ENCODE measurements at regions of chr12 and their contacts with region 1.

Region 1: GRCh38 chr12:56987551-56988053 is 18.7 kb downstream of the ZBTB39 start:
- DNase-seq: peak; percentile 80 to 82
- ATAC-seq: peak; percentile 74 to 84
- H3K4me3 ChIP-seq: no peak overlapping the region
- H3K27ac ChIP-seq: peak overlapping the region; percentile 22 to 34; a peak in 2 of 6 replicates
- H3K4me1 ChIP-seq: peaks cover 13% of the 10 kb centered on the region; the same call in 2 of the 3 replicates
- CTCF ChIP-seq: peak; percentile 91
- EP300 ChIP-seq: no peak
- POLR2A ChIP-seq: no peak
- RAD21 ChIP-seq: peak; percentile 98 to 99

Region 2: DNA sequence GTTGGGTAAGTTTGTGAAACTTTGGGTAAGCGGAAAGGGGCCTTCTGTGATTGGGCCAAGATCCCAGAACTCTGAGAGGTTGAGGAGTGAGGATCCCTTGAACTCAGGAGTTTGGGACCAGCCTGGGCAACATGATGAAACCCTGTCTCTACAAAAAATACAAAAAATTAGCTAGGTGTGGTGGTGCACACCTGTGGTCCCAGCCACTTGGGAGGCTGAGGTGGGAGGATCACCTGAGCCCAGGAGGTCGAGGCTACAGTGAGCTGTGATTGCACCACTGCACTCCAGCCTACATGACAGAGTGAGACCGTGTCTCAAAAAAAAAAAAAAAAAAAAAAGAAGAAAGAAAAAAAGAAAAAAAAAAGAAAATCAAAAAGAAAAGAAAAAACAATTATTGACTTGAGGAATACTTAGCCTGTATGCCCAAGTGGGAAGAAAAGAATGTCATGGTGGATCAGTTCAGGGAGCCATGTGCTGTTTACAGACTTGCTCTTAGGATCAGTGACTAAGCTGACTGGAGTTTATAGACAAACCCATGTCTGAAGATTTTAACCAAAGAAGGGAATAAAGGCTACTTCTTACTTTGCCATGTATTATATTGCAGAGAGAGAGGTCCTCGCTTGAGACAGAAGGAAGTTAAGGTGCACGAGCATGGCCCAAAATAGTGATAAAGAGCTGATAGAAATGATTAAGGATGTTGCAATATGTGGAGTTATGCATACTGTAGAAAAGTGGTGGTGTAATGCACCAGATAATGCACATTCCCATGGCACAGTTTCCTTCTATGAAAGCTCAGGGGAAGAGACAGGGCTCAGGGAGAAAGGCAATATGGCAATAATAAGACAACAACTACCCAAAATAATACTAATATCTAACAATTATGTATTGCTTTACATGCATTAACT is 223.6 kb before region 1 on chr12:
- CTCF ChIA-PET with region 1: interaction called, 85 read pairs
- POLR2A ChIA-PET with region 1: no interaction called
- DNase-seq: peak in 1 of 2 experiments; percentile 54
- ATAC-seq: peak; percentile 22 to 66; a peak in 3 of 6 replicates
- H3K4me3 ChIP-seq: no peak overlapping the region
- H3K27ac ChIP-seq: no peak overlapping the region
- H3K4me1 ChIP-seq: peaks cover 12% of the 10 kb centered on the region; the same call in 1 of the 3 replicates
- CTCF ChIP-seq: no peak
- EP300 ChIP-seq: no peak
- POLR2A ChIP-seq: no peak
- RAD21 ChIP-seq: no peak

Region 3: DNA sequence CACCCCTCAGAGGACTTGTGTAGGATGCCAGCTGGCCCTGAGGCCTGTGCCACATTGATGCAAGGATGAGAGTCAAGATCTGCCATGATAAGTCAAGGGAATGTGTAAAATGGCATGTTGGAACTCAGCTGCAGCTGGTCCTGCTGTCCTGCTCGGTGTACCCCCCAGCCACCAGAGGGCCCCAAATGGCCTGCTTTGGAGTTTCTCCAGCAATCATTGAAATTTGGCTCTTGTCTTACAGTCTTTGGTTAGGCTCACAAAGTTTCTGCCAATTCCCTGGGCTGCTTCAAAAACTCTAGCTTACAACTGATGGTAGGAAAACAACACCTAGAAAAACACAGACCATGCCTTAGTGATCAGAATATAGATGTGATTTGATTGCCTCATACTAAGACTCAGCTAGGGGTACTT is 147.7 kb before region 1 on chr12:
- CTCF ChIA-PET with region 1: interaction called, 87 read pairs
- POLR2A ChIA-PET with region 1: interaction called, 3 read pairs
- DNase-seq: peak; percentile 33 to 65
- ATAC-seq: peak; percentile 80 to 91; a peak in 5 of 6 replicates
- H3K4me3 ChIP-seq: no peak overlapping the region
- H3K27ac ChIP-seq: no peak overlapping the region; a peak in 1 of 6 replicates
- H3K4me1 ChIP-seq: peaks cover 21% of the 10 kb centered on the region; the same call in 2 of the 3 replicates
- CTCF ChIP-seq: peak; percentile 83
- EP300 ChIP-seq: no peak
- POLR2A ChIP-seq: no peak
- RAD21 ChIP-seq: peak; percentile 94 to 98

Region 4: DNA sequence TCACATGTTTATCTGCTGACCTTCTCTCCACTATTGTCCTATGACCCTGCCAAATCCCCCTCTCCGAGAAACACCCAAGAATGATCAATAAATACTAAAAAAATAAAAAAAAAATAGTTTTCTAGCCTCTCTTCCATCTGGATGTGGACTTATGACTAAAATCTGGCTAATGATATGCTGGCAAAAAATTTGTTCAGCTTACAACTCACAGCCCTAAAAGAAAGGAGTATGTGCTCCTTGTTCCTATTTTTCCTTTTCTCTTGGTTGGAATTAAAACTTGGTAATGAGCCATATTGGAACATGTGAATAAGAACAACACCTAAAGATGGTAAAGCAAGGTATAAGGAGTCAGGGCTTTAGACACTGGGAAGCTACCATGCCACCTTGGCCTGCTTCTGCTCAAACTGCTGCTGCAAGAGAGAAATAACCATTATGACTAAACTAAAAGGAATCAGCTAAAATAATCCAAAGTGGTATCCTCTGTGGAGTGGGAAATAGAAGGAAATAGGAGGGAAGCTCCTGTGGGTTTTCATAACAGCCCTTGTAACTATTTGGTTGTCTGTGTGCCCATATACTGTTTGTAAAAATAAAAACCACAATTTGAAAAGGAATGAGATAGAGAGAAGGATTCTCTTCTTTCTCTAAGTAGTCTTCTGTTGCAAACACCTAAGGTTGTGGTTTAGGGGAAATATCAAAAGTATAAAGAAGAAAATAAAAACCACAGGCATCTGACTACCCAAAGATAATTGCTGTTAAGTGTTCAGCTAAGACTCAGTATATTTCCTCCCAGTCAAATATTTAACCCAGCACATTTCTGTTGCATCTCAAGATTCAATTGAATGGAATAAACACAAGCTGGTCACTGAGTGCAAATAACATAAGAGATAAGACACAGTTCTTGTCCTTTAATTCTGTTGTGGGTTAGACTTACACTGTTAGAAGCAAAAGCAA is 107.2 kb before region 1 on chr12:
- CTCF ChIA-PET with region 1: interaction called, 11 read pairs
- POLR2A ChIA-PET with region 1: no interaction called
- DNase-seq: no peak
- ATAC-seq: no peak; a peak in 1 of 6 replicates
- H3K4me3 ChIP-seq: no peak overlapping the region
- H3K27ac ChIP-seq: peak overlapping the region; percentile 5 to 20; a peak in 2 of 6 replicates
- H3K4me1 ChIP-seq: peaks cover 38% of the 10 kb centered on the region
- CTCF ChIP-seq: no peak
- EP300 ChIP-seq: no peak
- POLR2A ChIP-seq: no peak
- RAD21 ChIP-seq: no peak

Region 5: DNA sequence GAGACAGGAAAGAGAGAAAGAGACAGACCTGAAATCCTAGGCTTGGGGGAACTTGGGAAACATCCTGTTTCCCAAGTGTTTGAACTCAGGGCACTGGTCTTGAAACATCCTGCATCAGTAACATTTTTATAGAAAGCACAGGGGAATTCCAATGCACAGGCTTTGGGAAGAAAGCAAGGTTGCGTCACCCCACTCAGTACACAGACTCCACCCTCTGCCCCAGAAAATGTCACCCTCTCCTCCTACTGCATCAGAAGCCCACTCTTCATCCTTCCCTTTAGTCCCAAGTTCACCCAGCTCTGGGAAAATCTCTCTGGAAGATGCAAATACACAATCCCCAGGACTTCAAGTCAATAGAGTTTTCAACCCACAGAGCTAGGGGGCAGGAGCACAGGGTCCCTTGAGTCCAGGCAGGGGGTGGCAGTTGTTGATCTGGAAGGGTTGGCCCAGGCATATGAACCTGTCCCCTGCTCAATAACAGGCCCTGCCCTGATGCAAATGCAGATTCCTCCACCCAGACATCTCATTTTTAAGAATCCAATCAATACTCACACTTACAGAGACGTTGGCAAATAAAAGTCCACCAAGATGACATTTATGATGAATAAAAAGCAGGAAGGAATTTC is 31.9 kb before region 1 on chr12:
- CTCF ChIA-PET with region 1: interaction called, 27 read pairs
- POLR2A ChIA-PET with region 1: no interaction called
- DNase-seq: peak in 1 of 2 experiments; percentile 18
- ATAC-seq: peak in 1 of 2 experiments; percentile 65; a peak in 3 of 6 replicates
- H3K4me3 ChIP-seq: no peak overlapping the region
- H3K27ac ChIP-seq: peak overlapping the region in 1 of 2 experiments; percentile 51; a peak in 3 of 6 replicates
- H3K4me1 ChIP-seq: peaks cover 20% of the 10 kb centered on the region
- CTCF ChIP-seq: no peak
- EP300 ChIP-seq: no peak
- POLR2A ChIP-seq: no peak
- RAD21 ChIP-seq: no peak

Region 6: DNA sequence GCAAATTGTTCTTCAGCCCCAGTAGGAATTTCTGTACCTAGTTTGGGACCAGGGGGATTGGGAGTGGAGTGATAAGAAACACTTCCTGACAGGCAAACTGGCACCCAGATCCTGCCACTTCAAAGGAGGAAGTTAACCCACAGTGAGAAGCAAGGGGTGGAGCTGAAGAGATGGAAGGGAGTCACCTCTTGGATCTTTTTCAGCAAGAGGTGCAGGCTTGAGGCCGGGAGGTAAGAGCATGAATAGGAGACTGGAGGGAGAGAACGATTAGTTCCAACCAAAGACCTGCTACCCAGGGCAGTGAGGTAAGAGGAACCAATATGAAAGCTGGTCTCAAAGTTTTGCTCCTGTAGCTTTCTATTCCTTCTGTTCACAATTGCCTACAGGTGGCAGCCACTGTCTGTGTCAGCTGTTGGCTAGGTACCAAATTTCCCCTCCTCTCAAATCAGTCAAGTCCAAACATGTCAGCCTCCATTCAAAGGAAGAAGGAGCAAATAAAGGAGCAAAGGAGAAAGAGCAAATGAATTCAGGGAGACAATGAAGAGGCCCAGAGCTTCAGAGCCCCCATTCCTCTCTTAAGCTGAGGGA is 43.6 kb after region 1 on chr12:
- CTCF ChIA-PET with region 1: interaction called, 12 read pairs
- POLR2A ChIA-PET with region 1: no interaction called
- DNase-seq: peak in 1 of 2 experiments; percentile 35
- ATAC-seq: peak in 1 of 2 experiments; percentile 47; a peak in 3 of 6 replicates
- H3K4me3 ChIP-seq: no peak overlapping the region
- H3K27ac ChIP-seq: peak overlapping the region in 1 of 2 experiments; percentile 37; a peak in 2 of 6 replicates
- H3K4me1 ChIP-seq: peaks cover 6% of the 10 kb centered on the region; the same call in 2 of the 3 replicates
- CTCF ChIP-seq: no peak
- EP300 ChIP-seq: no peak
- POLR2A ChIP-seq: no peak
- RAD21 ChIP-seq: no peak

Measured in A549 (cell line).